Activated naive CD4-positive, alpha-beta T cell treated with anti-CD3 and anti-CD28 coated beads for 36 hours (primary cell): ENCODE measurements at regions of chr10 and their contacts with region 1.

Region 1: DNA sequence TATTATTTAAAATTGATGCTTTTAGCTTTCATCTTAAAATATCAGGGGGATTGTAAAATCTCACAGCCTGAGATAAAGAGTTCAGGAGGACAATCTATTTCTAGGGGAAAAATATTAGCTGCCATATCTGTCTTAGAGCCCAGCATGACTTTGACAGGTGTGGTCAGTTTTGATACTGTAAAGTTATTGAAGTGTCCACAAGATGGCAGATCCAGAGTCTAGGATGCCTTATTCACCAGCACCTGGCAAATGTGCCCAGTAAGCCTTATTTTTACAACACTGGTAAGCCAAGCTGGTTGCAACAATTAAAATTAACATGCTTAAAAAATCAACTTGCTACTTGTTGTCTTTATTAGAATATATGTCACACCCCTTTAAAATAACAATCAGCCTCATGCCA is 579.3 kb downstream of the SH2D4B start:
- DNase-seq: no peak
- H3K4me3 Mint-ChIP-seq: no peak overlapping the region
- H3K27ac Mint-ChIP-seq: no peak overlapping the region
- H3K4me1 Mint-ChIP-seq: no peaks in the 10 kb centered on the region
- H3K27me3 Mint-ChIP-seq: no peaks in the 10 kb centered on the region

Region 2: GRCh38 chr10:81081887-81082620 is 34.9 kb before region 1 on chr10:
- CTCF ChIA-PET with region 1: no interaction called
- intact Hi-C with region 1: loop called (anchors 1 kb)
- DNase-seq: no peak
- H3K4me3 Mint-ChIP-seq: no peak overlapping the region
- H3K27ac Mint-ChIP-seq: no peak overlapping the region
- H3K4me1 Mint-ChIP-seq: no peaks in the 10 kb centered on the region
- H3K27me3 Mint-ChIP-seq: peaks cover 3% of the 10 kb centered on the region

Region 3: DNA sequence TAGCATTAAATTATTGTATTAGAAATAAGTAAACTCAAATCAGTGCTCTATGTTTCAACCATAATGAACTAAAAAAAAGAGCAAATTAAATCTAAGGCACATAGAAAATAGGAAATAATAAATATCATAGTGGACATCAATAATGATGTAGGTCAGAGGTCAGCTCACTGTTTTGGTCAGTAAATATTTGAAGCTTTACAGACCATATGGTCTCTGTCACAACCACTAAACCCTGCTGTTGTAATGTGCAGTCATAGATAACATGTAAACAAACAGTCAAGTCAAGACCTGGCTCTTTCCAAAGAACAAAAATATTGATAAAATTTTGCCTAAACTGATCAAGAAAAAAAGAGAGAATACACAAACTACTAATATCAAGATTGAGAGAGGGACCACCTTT is 35.7 kb after region 1 on chr10:
- CTCF ChIA-PET with region 1: no interaction called
- intact Hi-C with region 1: no loop called
- DNase-seq: no peak
- H3K4me3 Mint-ChIP-seq: no peak overlapping the region
- H3K27ac Mint-ChIP-seq: no peak overlapping the region
- H3K4me1 Mint-ChIP-seq: no peaks in the 10 kb centered on the region
- H3K27me3 Mint-ChIP-seq: no peaks in the 10 kb centered on the region